Activated T-helper 1 cell treated with anti-CD3 and anti-CD28 coated beads, Interleukin-12 subunit alpha, Interleukin-12 subunit beta, Interleukin-2, Interleukin-4 antibody, amounts not matched to agents 30 ng/mL and 10 ng/mL and 1 ng/mL, durations not matched to agents 14 hours and 24 hours and 36 hours (primary cell): ENCODE measurements at regions of chr5 and their contacts with region 1.

Region 1: GRCh38 chr5:173331956-173332479 is 3.8 kb upstream of the STC2 start:
- DNase-seq: peak; percentile 86
- H3K4me3 Mint-ChIP-seq: peak overlapping the region; percentile 56
- H3K27ac Mint-ChIP-seq: peak overlapping the region; percentile 79
- H3K4me1 Mint-ChIP-seq: peaks cover 35% of the 10 kb centered on the region
- H3K27me3 Mint-ChIP-seq: peaks cover 11% of the 10 kb centered on the region

Region 2: GRCh38 chr5:172395483-172395882 is 936.5 kb before region 1 on chr5:
- intact Hi-C with region 1: no loop called
- DNase-seq: no peak
- H3K4me3 Mint-ChIP-seq: no peak overlapping the region
- H3K27ac Mint-ChIP-seq: no peak overlapping the region
- H3K4me1 Mint-ChIP-seq: no peaks in the 10 kb centered on the region
- H3K27me3 Mint-ChIP-seq: peaks cover 16% of the 10 kb centered on the region

Region 3: DNA sequence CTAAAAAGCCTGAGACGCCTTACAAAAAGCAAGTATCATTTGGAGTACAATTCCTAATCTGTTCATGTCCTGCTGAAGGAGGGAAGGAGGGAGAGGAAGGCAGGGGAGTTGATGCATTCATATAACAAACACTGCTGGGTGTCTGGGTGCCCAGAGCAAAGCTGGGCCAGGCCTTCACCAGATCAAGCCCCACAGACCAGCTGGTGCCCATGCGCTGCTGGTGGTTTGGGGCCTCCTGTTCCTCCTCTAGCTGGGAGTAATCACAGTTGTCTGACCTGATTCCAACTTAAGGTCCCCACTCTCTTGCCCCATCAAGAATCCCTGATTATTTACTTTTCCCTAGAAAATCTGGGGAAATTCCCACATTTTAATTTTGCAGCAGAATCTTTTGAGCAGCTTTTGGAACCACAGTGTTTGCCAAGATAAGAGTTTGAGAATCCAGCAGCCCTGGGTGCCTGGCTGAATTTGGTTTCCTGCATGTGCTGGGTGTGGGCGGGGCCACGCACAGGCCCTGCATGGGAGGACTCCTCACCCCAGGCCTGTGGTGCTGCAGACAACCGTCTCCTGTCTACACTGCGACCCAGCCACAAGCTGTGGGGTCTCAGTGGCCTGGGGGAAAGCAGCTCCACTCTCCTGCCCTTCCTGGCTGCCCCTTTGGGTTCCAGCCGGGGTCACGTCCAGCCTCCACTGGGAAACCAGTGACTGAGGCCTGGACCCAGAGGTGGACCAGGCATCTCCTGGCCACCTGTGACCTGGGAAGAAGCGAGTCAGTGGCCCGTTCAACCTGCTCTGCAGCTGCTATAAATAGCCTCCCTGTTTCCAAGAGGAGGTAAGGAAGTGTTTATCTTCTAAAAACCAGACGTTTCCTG is 643.4 kb before region 1 on chr5:
- intact Hi-C with region 1: no loop called
- DNase-seq: no peak
- H3K4me3 Mint-ChIP-seq: no peak overlapping the region
- H3K27ac Mint-ChIP-seq: peak overlapping the region; percentile 40
- H3K4me1 Mint-ChIP-seq: peaks cover 14% of the 10 kb centered on the region
- H3K27me3 Mint-ChIP-seq: peaks cover 2% of the 10 kb centered on the region

Region 4: DNA sequence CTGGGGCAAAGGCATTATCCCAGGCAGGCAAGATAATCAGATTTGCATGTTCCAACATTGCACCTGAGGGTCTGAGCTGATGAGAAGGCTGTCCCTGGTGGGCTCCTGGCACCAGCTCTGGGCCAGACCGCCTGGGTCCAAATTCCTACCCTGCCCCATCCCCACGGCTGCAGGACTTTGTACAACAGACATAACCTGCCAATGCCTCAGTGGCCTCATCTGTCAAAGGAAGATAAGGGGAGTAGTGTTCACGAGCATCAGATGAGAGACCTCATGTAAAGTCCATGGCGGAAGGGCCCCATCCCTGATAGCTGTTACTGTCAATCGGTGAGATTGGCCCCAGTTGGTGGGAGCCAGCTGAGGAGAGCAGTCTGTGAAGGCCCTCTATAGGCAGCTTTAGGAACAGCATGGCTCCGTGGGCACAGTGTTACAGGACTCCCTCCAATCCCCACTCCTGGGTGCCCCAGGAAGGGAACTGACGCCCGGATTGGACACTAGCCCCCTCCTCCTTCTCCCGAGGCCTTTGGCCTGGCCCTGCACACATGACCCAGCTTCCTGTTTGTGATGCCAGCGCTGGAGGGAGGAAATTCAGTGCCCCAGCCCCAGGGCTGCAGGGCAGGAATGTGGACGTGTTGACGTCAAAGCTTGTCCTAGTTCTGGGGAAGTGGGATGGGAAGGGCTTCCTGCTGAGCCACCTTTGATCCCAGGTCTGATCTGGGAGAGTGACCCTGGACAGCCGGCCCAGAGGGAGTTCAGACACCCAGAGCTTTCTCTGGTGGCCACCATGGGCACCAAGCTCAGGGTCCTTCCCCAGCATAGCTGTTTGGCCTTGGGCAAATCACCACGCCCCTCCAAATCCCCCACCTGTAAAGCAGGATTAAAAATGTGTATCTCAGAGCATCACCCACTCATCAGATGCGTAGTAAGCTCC is 617.3 kb before region 1 on chr5:
- intact Hi-C with region 1: loop called (anchors 5 kb)
- DNase-seq: peak; percentile 45
- H3K4me3 Mint-ChIP-seq: no peak overlapping the region
- H3K27ac Mint-ChIP-seq: no peak overlapping the region
- H3K4me1 Mint-ChIP-seq: no peaks in the 10 kb centered on the region
- H3K27me3 Mint-ChIP-seq: peaks cover 7% of the 10 kb centered on the region

Region 5: DNA sequence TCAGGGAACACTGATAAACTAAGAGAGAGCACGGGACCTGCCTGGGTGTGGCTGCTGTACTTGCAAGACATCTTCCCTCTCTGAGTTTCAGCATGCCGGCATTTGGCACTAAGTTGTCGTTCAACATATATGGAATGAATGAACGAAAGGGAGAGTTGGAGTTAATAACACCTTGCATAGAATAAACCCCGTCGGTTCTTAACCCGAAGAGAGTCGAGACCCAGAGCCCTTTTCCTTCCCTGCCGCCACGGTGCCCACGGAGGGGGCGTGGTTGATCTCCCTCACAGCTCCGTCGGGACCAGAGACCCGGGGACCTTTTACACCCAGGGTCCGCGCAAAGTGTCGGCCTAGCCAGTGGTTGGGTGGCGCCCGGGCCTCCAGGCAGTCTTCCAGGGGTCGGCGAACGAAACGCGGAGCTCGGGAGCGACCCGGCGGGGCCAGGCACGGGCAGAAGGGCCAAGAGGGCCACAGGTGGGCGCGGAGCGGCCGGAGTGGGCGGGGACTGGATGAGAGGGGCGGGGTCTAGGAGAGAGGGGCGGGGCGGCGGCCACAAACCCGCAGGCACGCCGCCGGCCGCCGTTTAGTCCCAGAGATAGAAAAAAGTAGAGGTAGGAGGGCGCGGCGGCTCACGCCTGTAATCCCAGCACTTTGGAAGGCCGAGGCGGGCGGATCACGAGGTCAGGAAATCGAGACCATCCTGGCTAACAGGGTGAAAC is 373.5 kb before region 1 on chr5:
- intact Hi-C with region 1: loop called (anchors 1 kb)
- DNase-seq: peak; percentile 51
- H3K4me3 Mint-ChIP-seq: peak overlapping the region; percentile 99
- H3K27ac Mint-ChIP-seq: peak overlapping the region; percentile 98
- H3K4me1 Mint-ChIP-seq: peaks cover 27% of the 10 kb centered on the region
- H3K27me3 Mint-ChIP-seq: peaks cover 6% of the 10 kb centered on the region

Region 6: GRCh38 chr5:173144200-173145176 is 187.5 kb before region 1 on chr5 and contains the start of gene BNIP1:
- intact Hi-C with region 1: loop called (anchors 1 kb)
- DNase-seq: peak; percentile 91
- H3K4me3 Mint-ChIP-seq: peak within 1 kb of the TSS; percentile 96
- H3K27ac Mint-ChIP-seq: peak within 1 kb of the TSS; percentile 97
- H3K4me1 Mint-ChIP-seq: peaks cover 9% of the 10 kb centered on the region
- H3K27me3 Mint-ChIP-seq: no peaks in the 10 kb centered on the region
- total RNA-seq, gene BNIP1: 22.6 and 25.3 TPM in 2 replicates

Region 7: GRCh38 chr5:173155912-173156311 is 176.1 kb before region 1 on chr5:
- intact Hi-C with region 1: no loop called
- DNase-seq: no peak
- H3K4me3 Mint-ChIP-seq: no peak overlapping the region
- H3K27ac Mint-ChIP-seq: no peak overlapping the region
- H3K4me1 Mint-ChIP-seq: no peaks in the 10 kb centered on the region
- H3K27me3 Mint-ChIP-seq: no peaks in the 10 kb centered on the region

Region 8: DNA sequence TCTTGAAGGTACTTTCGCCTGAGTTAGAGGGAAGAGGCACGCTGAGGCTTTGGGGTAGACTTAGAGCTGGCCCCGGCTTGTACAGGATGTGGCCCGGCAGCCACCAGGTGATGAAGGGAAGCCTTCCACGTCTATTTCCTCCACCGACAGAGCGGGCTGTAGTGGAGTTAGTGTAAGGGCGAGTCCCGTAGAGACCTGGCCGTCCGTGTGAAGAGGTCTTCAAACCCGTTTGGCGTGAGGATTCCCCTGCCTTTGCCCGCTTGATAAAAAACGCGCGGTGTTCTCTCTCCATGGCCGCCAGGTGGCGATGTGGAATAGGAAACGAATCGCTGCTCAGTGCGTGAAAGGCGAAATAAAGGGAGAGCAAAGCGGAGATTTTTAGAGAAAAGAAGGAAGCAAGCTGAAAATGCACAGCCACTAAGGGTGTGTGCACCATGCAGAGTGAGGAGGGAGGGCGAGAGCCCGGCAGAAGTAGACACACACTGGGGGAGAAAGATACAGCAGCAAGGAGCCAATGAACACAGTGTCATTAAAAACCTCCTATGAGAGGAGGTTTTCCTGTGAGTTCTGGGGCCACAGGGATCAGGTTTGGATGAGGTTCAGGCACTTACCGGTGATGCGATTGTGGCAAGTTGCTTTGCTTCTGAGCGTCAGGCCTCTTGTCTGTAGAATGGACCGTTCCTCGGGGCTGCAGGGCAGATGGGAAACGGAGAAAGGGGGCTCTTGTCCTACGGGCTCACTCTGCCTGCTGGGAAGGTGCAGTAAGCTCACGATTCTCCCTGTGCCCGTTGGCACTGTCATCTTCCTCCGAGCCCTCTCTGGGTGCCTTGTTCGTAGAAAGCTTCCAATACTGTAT is 38.0 kb before region 1 on chr5:
- intact Hi-C with region 1: loop called (anchors 1 kb)
- DNase-seq: peak; percentile 64
- H3K4me3 Mint-ChIP-seq: peak overlapping the region; percentile 46
- H3K27ac Mint-ChIP-seq: no peak overlapping the region
- H3K4me1 Mint-ChIP-seq: peaks cover 15% of the 10 kb centered on the region
- H3K27me3 Mint-ChIP-seq: peaks cover 34% of the 10 kb centered on the region

Region 9: GRCh38 chr5:173522518-173522917 is 190.5 kb after region 1 on chr5:
- intact Hi-C with region 1: no loop called
- DNase-seq: no peak
- H3K4me3 Mint-ChIP-seq: no peak overlapping the region
- H3K27ac Mint-ChIP-seq: no peak overlapping the region
- H3K4me1 Mint-ChIP-seq: no peaks in the 10 kb centered on the region
- H3K27me3 Mint-ChIP-seq: peaks cover 6% of the 10 kb centered on the region

Region 10: DNA sequence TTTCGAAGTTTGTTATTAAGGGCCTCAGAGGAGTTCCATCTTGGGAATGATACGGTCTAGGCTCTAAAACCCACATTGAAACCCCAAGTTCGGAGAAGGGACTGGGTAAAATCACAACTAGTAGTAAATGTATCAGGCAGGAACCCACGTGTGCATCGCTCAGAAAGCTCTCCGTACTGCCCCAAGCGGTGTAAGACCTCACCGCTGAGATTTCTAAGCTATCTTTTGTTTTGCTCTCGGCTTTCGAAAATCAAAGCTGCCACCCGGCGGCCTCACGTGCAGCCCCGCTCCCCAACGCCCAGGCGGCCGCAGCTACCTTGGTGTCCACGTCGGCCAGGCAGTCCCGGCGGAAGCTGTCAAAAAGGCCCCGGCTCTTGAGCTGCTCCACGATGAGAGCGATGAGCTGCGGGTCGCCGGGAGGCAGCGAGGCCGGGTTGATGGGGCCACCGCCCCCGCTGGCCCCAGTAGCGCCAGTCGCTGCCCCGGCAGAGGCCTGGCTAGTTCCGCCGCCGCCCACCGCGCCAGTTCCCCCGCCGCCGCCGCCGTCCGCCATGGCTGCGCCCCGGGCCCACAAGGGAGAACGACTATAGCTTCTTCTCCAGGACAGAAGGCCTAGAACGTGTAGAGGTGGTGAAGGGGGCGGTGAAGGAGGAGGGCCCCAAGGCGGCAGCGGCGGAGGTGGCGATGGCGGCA is 284.0 kb after region 1 on chr5:
- intact Hi-C with region 1: loop called (anchors 1 kb)
- DNase-seq: peak; percentile 65
- H3K4me3 Mint-ChIP-seq: peak overlapping the region; percentile 96
- H3K27ac Mint-ChIP-seq: peak overlapping the region; percentile 88
- H3K4me1 Mint-ChIP-seq: peaks cover 37% of the 10 kb centered on the region
- H3K27me3 Mint-ChIP-seq: no peaks in the 10 kb centered on the region

Region 11: DNA sequence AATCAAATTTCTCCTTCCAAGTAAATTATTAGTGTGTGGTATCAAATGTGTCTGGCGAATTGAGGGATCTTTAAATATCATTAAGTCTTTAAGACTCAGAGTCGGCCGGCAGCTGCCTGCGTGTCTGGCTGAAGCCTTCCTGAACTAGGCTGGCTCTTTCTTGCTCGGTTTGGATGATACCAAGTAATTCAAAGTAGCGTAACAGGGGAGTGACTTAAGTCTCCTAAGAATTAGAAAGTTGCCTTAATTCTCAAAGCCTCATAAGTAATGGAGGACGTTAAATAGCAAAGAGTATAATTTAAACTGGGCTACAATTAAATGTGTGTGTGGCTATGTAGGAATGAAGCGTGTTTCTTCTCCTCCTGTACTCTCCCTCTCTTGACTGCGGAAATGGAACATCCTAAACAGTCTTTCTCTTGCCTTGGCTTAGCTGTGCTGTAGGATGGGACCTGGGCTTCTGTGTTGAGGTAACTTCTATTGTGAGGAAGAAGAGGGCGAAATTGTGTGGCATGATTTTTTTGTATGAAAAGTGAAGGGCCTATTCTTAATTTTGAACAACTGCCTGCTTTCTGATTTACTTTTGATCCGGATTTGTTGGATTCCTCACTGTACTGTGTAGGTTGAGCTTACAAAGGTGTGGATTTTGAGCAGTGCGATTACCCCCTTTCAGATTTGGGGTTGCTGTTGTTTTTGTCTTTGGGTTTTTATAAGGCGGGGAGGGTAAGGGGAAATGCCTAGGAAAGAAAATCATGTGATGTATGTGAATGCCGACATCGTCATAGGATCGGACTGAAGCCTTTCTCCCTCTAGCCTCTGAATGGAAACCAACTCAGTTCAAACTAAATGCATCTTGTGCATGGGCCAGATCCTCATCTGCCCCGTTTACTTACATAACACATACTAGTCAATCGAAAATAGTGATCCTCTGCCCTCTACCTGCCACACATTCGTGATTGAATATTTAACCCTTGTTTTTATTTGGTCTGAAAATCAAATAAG is 586.1 kb after region 1 on chr5:
- intact Hi-C with region 1: loop called (anchors 10 kb)
- DNase-seq: peak; percentile 44
- H3K4me3 Mint-ChIP-seq: no peak overlapping the region
- H3K27ac Mint-ChIP-seq: no peak overlapping the region
- H3K4me1 Mint-ChIP-seq: no peaks in the 10 kb centered on the region
- H3K27me3 Mint-ChIP-seq: no peaks in the 10 kb centered on the region